Activated CD8-positive, alpha-beta T cell treated with anti-CD3 and anti-CD28 coated beads for 36 hours (primary cell): ENCODE measurements at regions of chr9 and their contacts with region 1.

Region 1: GRCh38 chr9:7580568-7580967 is 219.0 kb downstream of the DMAC1 start:
- DNase-seq: no peak
- ATAC-seq: no peak
- H3K4me3 Mint-ChIP-seq: no peak overlapping the region
- H3K27ac Mint-ChIP-seq: no peak overlapping the region
- H3K4me1 Mint-ChIP-seq: no peaks in the 10 kb centered on the region
- H3K27me3 Mint-ChIP-seq: no peaks in the 10 kb centered on the region
- CTCF ChIP-seq: no peak

Region 2: DNA sequence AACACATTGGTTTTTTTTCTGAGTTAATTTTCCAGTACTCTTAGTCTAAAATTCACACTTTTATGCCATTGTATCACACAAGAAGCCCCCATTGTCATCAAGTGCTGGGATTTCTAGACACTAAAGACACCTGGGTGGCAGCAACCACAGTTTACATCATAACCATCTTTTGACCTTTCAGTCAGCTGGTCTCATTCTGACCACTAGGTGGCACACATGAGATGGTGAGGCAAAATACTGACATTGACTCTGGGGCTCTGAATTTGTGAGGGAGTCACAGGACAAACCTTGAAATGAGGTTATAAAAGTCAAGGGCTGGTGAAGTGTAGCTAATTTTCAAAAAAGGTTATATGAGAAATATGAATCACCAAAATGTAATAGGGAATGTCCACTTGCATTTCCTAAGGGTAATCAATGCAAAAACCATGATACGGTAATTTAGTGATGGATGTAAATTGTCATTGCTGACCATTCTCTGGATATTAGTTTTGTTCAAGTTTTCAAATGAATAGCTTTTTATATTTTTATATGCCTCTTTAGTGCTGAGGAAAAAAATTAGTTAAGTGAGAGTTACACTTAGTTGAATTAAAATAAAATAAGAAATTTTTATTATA is 10.4 kb before region 1 on chr9:
- CTCF ChIA-PET with region 1: interaction called, 10 read pairs
- POLR2A ChIA-PET with region 1: no interaction called
- intact Hi-C with region 1: no loop called
- DNase-seq: peak; percentile 82
- ATAC-seq: peak; percentile 74
- H3K4me3 Mint-ChIP-seq: no peak overlapping the region
- H3K27ac Mint-ChIP-seq: no peak overlapping the region
- H3K4me1 Mint-ChIP-seq: no peaks in the 10 kb centered on the region
- H3K27me3 Mint-ChIP-seq: no peaks in the 10 kb centered on the region
- CTCF ChIP-seq: peak; percentile 81